GM23248 (cell line): ENCODE measurements at regions of chr20 and their contacts with region 1.

Region 1: DNA sequence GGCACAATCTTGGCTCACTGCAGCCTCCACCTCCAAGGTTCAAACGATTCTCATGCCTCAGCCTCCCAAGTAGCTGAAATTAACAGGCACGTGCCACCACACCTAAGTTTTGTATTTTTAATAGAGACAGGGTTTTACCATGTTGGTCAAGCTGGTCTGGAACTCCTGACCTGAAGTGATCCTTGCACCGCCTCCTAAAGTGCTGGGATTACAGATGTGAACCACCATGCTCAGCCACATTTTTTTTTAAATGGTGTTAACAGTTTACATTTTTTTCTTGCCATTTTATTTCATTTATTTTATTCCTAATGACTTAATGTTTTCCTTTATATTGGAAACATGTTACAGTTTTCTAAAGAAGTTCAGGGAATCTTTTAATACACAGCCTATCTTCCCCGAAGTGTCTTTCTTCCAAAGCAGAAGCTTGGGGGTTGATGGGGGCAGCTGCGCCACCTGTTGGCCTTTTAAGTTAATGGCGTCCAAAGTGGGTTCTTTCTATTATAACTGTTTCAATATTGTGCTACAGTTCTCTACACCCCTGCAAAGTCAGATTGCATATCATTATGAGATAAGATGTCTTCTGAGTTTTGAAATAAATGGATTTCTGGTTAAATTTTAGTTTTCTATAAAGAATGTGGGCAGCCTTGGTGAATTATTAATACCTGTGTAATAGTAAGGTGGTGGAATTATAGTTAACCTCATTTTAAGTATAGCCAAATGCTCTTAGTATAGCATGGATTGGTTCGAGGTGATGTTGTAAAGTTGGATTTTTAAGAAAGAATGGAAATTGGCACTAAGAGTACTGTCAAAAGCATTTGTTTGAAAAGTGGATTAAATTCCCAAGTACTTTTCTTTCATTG is 42.0 kb upstream of the PLCG1 start:
- DNase-seq: peak; percentile 77
- H3K4me3 ChIP-seq: no peak overlapping the region
- H3K27ac ChIP-seq: 0 out of 2 replicates have a peak overlapping the region, but pooled peaks have one; percentile 27
- H3K4me1 ChIP-seq: peaks cover 27% of the 10 kb centered on the region
- H3K27me3 ChIP-seq: no peaks in the 10 kb centered on the region

Region 2: GRCh38 chr20:39986173-39986904 is 1109.0 kb before region 1 on chr20:
- in situ Hi-C with region 1: loop called (anchors 25 kb)
- DNase-seq: peak; percentile 74
- H3K4me3 ChIP-seq: no peak overlapping the region
- H3K27ac ChIP-seq: peak overlapping the region; percentile 49
- H3K4me1 ChIP-seq: peaks cover 13% of the 10 kb centered on the region
- H3K27me3 ChIP-seq: no peaks in the 10 kb centered on the region

Region 3: GRCh38 chr20:40970201-40970600 is 125.1 kb before region 1 on chr20:
- in situ Hi-C with region 1: loop called (anchors 5 kb)
- DNase-seq: no peak
- H3K4me3 ChIP-seq: no peak overlapping the region
- H3K27ac ChIP-seq: no peak overlapping the region
- H3K4me1 ChIP-seq: 0 out of 2 replicates have a peak, but pooled peaks cover 5% of the 10 kb centered on the region
- H3K27me3 ChIP-seq: 0 out of 2 replicates have a peak, but pooled peaks cover 3% of the 10 kb centered on the region